ENCODE measurements at regions of chr6 and their contacts with region 1.

Region 1: DNA sequence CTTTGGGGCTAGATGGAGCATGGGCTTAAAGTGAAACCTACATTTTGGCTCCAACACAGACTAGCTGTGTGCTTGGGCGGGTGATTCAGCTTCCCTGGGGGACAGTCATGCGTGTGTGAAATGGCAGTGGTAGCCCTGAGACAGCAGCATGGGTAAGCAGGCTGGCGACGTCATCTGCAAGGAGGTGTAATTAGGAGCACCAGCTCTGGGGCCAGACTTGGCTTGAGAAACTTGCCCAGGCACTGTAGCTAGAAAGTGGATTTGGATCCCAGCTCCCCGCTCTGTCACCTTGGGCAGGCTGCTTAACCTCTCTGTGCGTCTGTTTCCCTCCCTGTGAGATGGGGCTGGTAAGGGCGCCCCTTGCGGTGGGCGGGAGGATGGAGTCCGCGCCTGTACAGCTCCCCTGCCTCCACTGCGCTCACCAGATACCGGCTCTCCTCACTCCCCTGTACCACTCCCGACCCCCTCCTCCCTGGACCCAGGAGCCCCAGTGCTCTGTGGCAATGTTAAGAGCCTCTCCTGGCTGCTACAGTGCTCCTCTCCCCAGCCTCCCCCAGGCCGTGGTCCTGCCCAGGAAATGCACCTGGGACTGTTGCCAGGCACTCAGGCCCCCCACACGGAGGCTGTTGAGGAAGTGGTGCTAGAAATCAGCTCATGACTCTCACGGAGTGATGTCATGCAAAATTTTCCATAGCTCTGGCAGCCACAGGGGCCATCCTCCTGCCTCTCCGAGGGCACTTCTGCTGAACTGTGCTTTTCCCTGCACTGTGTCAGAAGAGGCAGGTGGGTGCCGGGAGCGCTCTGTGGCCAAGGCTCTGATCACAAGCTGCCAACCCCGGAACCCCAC is 44.6 kb downstream of the SYNJ2 start:
- DNase-seq: peak; percentile 91
- H3K4me3 Mint-ChIP-seq: peak overlapping the region; percentile 81
- H3K27ac Mint-ChIP-seq: peak overlapping the region; percentile 99
- H3K4me1 Mint-ChIP-seq: peaks cover 36% of the 10 kb centered on the region
- H3K27me3 Mint-ChIP-seq: no peaks in the 10 kb centered on the region

Region 2: GRCh38 chr6:157885211-157885788 is 141.0 kb before region 1 on chr6:
- CTCF ChIA-PET with region 1: interaction called, 4 read pairs
- intact Hi-C with region 1: loop called (anchors 1 kb)
- DNase-seq: peak; percentile 88
- H3K4me3 Mint-ChIP-seq: peak overlapping the region; percentile 50
- H3K27ac Mint-ChIP-seq: peak overlapping the region; percentile 97
- H3K4me1 Mint-ChIP-seq: peaks cover 79% of the 10 kb centered on the region
- H3K27me3 Mint-ChIP-seq: no peaks in the 10 kb centered on the region

Region 3: GRCh38 chr6:157989541-157990289 is 36.6 kb before region 1 on chr6:
- CTCF ChIA-PET with region 1: interaction called, 39 read pairs
- intact Hi-C with region 1: loop called (anchors 1 kb)
- DNase-seq: peak; percentile 60
- H3K4me3 Mint-ChIP-seq: peak overlapping the region; percentile 77
- H3K27ac Mint-ChIP-seq: no peak overlapping the region
- H3K4me1 Mint-ChIP-seq: peaks cover 55% of the 10 kb centered on the region
- H3K27me3 Mint-ChIP-seq: no peaks in the 10 kb centered on the region

Region 4: DNA sequence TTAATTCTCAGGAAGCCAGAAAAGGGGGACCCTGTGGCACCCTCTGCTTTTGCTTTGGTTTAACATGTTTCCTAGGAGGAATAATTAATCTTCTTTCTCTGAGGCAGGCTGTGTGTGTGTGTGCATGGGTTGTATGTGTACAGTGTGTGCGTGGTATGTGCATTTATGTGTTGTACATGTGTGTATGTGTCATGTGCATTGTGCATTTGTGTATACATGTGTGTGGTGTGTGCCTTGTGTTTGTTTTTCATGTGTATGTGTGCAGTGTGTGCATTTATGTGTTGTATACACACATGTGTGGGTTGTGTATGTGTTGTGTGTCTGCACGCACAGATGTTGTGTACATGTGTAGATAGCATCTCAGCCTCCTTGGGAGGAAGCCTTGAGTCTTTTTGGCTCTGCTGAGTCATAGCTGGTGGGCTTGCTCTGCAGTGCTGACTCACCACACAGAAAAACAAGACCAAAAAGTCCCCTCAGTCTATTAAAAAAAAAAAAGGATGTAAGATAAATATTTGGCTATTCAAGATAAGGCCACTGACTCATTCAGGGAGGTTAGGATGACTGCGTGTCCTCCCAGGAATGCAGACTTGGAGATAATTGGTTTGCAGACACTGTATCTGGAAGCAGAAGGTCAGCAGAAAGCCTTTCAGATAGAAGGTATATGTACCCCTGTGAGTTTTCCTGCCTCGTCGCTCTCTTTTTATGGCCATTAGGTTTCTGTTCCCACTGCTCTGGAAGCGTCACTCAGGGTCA is 13.9 kb after region 1 on chr6:
- CTCF ChIA-PET with region 1: interaction called, 25 read pairs
- intact Hi-C with region 1: loop called (anchors 1 kb)
- DNase-seq: peak; percentile 53
- H3K4me3 Mint-ChIP-seq: no peak overlapping the region
- H3K27ac Mint-ChIP-seq: peak overlapping the region; percentile 25
- H3K4me1 Mint-ChIP-seq: peaks cover 29% of the 10 kb centered on the region
- H3K27me3 Mint-ChIP-seq: no peaks in the 10 kb centered on the region

Region 5: DNA sequence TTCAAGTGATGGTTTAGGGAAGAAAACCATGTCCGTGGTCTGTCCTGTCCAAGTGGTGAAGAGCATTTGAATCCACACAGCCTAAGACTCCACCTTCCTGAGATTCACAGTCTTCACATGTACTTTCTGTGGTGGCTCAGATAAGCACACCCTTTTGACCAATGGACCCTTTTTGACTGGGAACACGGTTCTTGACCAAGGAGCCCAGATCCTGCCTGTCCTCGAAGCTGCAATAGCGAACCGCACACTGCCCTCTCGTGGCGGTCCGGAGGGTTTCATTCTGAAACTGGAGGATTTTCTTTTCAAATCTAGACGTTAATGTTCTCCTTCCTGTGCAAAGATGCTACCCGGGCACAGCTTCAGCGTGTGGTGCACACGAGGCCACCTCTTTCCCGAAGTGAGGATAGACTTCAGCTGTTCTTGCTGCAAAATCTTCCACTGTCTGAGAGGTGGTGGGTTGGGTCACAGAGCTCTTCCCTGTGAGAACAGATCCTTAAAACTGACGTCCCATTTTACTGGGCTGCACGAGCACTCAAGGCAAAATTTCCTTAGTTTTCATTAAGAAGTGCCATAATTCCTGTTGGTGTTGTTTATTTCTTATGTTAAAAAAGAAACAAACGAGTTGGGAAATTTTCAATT is 45.9 kb after region 1 on chr6:
- CTCF ChIA-PET with region 1: interaction called, 19 read pairs
- intact Hi-C with region 1: loop called (anchors 1 kb)
- DNase-seq: peak; percentile 86
- H3K4me3 Mint-ChIP-seq: no peak overlapping the region
- H3K27ac Mint-ChIP-seq: peak overlapping the region; percentile 65
- H3K4me1 Mint-ChIP-seq: peaks cover 26% of the 10 kb centered on the region
- H3K27me3 Mint-ChIP-seq: no peaks in the 10 kb centered on the region

Region 6: GRCh38 chr6:158575550-158575949 is 549.3 kb after region 1 on chr6:
- CTCF ChIA-PET with region 1: no interaction called
- intact Hi-C with region 1: no loop called
- DNase-seq: no peak
- H3K4me3 Mint-ChIP-seq: no peak overlapping the region
- H3K27ac Mint-ChIP-seq: no peak overlapping the region
- H3K4me1 Mint-ChIP-seq: peaks cover 30% of the 10 kb centered on the region
- H3K27me3 Mint-ChIP-seq: no peaks in the 10 kb centered on the region

Measured in activated naive CD4-positive, alpha-beta T cell treated with anti-CD3 and anti-CD28 coated beads for 36 hours (primary cell).